GM12878 (cell line): ENCODE measurements at regions of chr16 and their contacts with region 1.

Region 1: DNA sequence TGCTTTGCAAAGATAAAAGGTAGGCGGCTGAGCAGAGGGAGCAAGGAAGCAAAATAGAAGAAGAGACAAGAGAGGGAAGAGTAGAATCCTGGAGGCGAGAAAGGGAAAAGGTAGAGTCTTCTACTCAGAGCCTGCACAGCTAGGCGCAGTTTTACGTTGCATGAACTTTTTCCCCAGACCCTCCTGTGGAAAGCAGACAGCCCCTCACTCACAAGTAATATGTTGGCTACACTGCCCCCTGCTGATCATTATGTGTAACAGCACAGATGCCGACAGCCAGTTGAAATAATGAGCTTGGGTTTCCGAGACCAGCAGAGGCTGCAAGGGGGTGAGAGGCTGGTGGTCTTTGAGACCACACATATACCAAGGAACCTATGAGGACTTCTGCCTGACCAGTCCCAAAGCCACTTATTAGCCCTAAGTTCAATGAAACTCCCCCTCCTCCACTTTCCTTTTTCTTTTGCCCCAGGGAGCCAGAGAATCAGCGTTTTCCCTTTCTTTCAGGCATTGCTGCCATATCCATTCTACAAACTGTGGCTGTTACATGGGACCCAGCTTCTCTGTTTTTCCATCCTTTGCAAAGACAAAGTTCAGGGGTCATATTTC is 22.5 kb upstream of the CMTR2 start:
- DNase-seq: no peak
- ATAC-seq: peak; percentile 54
- H3K4me3 ChIP-seq: no peak overlapping the region
- H3K27ac ChIP-seq: no peak overlapping the region
- H3K4me1 ChIP-seq: no peaks in the 10 kb centered on the region
- H3K27me3 ChIP-seq: no peaks in the 10 kb centered on the region; a peak in 1 of 4 replicates
- CTCF ChIP-seq: peak; percentile 69 to 83 (median 77)
- EP300 ChIP-seq: no peak
- POLR2A ChIP-seq: no peak
- RAD21 ChIP-seq: peak; percentile 70

Region 2: DNA sequence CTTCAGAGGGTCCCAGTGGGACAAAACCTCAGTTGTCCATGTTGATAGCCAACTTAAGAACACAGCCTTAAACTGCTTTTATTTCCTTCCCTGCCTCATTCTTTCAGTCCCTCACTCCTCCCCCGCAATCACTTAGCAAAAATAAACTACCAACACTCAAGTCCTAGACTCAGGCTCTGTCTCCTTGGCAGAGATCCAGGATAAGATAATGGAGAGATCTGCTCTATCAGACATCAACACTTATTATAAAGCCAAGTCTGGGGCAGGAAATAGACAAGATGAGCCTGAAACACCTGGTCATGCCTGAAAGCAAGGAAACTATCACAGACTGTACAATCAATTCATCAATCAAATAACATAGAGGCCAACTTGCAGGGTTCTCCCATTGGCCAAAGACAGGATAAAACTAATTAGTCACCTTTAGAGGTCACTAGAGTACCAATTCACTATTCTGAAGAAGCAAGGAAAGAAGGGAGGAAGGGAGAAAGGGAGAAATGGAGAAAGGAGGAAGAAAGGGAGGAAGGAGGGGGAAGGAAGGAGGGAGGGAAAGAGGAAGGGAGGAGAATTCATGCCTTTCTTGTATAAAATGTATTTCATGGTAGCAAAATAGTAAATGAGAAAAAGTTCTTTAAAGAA is 96.8 kb before region 1 on chr16:
- CTCF ChIA-PET with region 1: interaction called, 9 read pairs
- POLR2A ChIA-PET with region 1: no interaction called
- RAD21 ChIA-PET with region 1: interaction called, 9 read pairs
- SMC1A ChIA-PET with region 1: interaction called, 6 read pairs
- in situ Hi-C with region 1: loop called (anchors 5 kb)
- intact Hi-C with region 1: loop called (anchors 1 kb)
- DNase-seq: no peak
- ATAC-seq: peak; percentile 49; the same call in 2 of the 3 replicates
- H3K4me3 ChIP-seq: no peak overlapping the region
- H3K27ac ChIP-seq: no peak overlapping the region
- H3K4me1 ChIP-seq: no peaks in the 10 kb centered on the region
- H3K27me3 ChIP-seq: no peaks in the 10 kb centered on the region
- CTCF ChIP-seq: peak; percentile 23 to 35 (median 26); a peak in 4 of 6 replicates
- EP300 ChIP-seq: no peak
- POLR2A ChIP-seq: no peak
- RAD21 ChIP-seq: peak; percentile 61

Region 3: DNA sequence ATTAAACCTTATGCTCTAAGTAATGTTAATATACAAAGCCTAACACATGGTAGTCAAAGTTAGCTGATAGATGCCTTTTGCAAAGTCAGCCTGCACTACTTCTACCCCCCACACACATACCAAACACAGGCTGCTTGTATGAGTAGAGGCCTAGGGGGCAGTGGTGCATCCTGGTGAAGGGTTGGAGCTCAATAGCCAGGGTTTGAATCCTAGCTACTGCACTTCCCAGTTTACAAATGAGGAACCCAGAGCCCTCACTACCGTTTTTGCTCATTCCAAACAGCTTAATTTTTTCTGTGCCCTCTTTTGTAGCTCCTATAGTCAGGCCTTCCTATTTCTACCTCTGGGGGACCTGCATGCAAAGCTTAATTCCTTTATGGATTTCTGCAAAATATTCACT is 62.3 kb before region 1 on chr16:
- CTCF ChIA-PET with region 1: interaction called, 24 read pairs
- POLR2A ChIA-PET with region 1: no interaction called
- RAD21 ChIA-PET with region 1: no interaction called
- SMC1A ChIA-PET with region 1: interaction called, 7 read pairs
- in situ Hi-C with region 1: no loop called
- intact Hi-C with region 1: no loop called
- DNase-seq: no peak
- ATAC-seq: no peak
- H3K4me3 ChIP-seq: no peak overlapping the region
- H3K27ac ChIP-seq: no peak overlapping the region
- H3K4me1 ChIP-seq: no peaks in the 10 kb centered on the region
- H3K27me3 ChIP-seq: no peaks in the 10 kb centered on the region; a peak in 1 of 4 replicates
- CTCF ChIP-seq: no peak
- EP300 ChIP-seq: no peak
- POLR2A ChIP-seq: no peak
- RAD21 ChIP-seq: no peak

Region 4: DNA sequence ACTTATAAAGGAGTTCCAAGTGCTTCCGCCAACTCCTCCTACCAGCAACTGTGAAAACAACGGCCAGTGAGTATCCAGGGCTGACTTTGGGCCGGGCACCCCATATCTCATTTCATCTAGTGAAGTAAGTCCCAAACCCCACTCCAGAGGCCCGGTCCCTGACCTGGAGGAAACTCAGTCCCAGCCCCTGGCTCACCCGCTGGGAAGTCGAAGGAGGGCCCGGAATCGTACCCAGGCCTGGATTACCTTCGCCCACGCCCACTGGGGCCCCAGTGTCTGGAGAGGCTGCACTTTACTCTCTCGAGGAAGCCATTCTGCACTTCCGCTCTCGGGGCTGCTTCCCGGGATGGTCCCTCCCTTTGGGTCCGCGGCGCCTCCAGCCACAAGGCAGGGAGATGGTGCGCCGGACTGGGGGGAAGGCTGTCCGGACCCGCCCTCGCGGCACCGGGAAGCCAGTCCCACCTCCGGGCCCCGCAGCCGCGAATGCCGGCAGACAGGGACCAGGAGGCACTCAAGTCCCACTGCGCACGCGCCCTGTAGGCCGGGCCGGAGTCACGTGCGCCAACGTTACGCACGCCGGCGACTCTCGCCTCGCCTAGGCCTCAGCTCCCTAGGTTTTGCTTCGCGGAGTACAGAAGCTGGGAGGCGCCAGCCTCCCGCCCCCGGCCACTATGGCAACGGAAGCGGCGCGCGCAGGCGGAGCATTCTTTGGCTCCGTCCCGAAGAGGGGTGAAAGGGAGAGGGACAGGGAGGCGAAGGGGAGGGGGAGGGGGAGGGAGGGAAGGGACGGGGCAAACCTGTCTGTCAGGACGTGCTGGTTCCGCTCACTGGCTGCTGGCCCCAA is 22.5 kb before region 1 on chr16 and contains the start of gene CMTR2:
- CTCF ChIA-PET with region 1: interaction called, 7 read pairs
- POLR2A ChIA-PET with region 1: no interaction called
- RAD21 ChIA-PET with region 1: interaction called, 13 read pairs
- SMC1A ChIA-PET with region 1: interaction called, 9 read pairs
- in situ Hi-C with region 1: no loop called
- intact Hi-C with region 1: no loop called
- DNase-seq: peak; percentile 86
- ATAC-seq: peak; percentile 96
- H3K4me3 ChIP-seq: peak within 1 kb of the TSS; percentile 80
- H3K27ac ChIP-seq: peak within 1 kb of the TSS; percentile 88
- H3K4me1 ChIP-seq: peaks cover 7% of the 10 kb centered on the region
- H3K27me3 ChIP-seq: no peaks in the 10 kb centered on the region
- CTCF ChIP-seq: peak in 1 of 3 experiments; percentile 15; a peak in 1 of 6 replicates
- EP300 ChIP-seq: no peak
- POLR2A ChIP-seq: peak; percentile 100
- RAD21 ChIP-seq: no peak
- polyA plus RNA-seq, gene CMTR2: 6.5 to 12.1 TPM

Region 5: DNA sequence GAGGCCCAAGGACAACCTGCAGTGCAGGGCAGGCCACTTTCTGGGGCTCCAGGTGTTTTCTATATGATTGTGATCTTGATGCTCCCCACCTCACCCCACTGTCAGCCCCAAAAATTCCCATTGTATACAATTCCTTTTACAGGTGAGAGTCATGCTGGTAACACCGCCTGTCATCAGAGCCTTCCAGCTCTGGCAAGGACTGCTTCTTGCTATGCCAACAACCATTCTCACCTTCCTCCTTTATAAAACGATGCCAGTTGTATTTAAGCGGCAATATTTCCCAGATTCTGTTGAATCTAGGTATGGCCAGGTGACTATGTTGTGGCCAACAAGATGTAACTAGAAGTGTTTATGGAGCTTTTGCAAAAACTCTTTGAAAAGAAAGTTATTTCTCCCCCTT is 16.5 kb after region 1 on chr16:
- CTCF ChIA-PET with region 1: interaction called, 13 read pairs
- POLR2A ChIA-PET with region 1: no interaction called
- RAD21 ChIA-PET with region 1: no interaction called
- SMC1A ChIA-PET with region 1: interaction called, 4 read pairs
- in situ Hi-C with region 1: no loop called
- intact Hi-C with region 1: no loop called
- DNase-seq: no peak
- ATAC-seq: no peak
- H3K4me3 ChIP-seq: no peak overlapping the region
- H3K27ac ChIP-seq: no peak overlapping the region
- H3K4me1 ChIP-seq: no peaks in the 10 kb centered on the region
- H3K27me3 ChIP-seq: no peaks in the 10 kb centered on the region
- CTCF ChIP-seq: no peak
- EP300 ChIP-seq: no peak
- POLR2A ChIP-seq: no peak
- RAD21 ChIP-seq: no peak